Activated T-helper 1 cell treated with anti-CD3 and anti-CD28 coated beads, Interleukin-12 subunit alpha, Interleukin-12 subunit beta, Interleukin-2, Interleukin-4 antibody, amounts not matched to agents 30 ng/mL and 10 ng/mL and 1 ng/mL, durations not matched to agents 14 hours and 24 hours and 36 hours (primary cell): ENCODE measurements at regions of chrX and their contacts with region 1.

Region 1: DNA sequence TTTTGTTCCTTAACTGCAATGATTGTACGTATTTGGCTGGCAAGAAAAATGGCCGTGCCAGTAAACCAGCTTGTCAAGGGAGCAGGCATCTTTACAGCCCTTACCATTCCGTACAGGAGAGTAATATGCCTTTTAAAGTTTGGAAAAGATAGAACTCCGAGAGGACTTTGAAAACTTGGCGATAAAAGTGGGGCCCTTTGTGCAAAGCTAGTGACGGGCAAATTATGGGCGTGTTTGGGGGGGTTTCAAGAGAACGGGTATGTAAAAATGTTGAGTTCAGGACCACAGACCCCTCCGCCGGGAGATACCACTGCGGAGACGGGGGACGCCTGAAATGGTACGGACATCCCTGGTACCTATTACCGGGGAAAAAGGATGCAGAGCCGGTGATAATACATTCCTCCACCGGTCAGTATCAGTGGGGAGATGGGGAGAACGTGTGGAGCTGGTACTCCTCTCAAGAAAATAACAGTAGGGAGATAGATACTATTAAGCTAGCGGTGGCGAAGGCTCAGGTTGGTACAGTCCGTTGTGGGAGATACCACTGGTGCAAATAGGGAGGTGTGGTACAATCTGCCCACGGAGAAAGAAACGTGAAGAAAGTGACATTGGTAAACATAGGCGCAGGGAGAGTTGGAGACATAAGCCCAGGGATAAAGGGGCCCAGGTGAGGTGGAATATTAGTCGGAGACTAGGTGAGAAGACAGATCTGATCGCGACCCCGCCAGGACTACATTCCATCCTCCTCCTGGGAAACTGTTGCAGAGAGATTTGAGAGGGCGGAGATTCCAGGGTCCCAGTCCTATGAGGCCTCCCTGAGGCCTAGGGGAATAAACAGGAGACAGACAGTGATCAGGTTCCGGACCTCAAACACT is 14.5 kb downstream of the SPACA5 start:
- DNase-seq: peak; percentile 54
- H3K4me3 Mint-ChIP-seq: peak overlapping the region; percentile 92
- H3K27ac Mint-ChIP-seq: peak overlapping the region; percentile 97
- H3K4me1 Mint-ChIP-seq: peaks cover 6% of the 10 kb centered on the region
- H3K27me3 Mint-ChIP-seq: peaks cover 7% of the 10 kb centered on the region

Region 2: GRCh38 chrX:47266643-47267042 is 754.6 kb before region 1 on chrX:
- intact Hi-C with region 1: no loop called
- DNase-seq: no peak
- H3K4me3 Mint-ChIP-seq: no peak overlapping the region
- H3K27ac Mint-ChIP-seq: peak overlapping the region; percentile 88
- H3K4me1 Mint-ChIP-seq: peaks cover 17% of the 10 kb centered on the region
- H3K27me3 Mint-ChIP-seq: no peaks in the 10 kb centered on the region

Region 3: DNA sequence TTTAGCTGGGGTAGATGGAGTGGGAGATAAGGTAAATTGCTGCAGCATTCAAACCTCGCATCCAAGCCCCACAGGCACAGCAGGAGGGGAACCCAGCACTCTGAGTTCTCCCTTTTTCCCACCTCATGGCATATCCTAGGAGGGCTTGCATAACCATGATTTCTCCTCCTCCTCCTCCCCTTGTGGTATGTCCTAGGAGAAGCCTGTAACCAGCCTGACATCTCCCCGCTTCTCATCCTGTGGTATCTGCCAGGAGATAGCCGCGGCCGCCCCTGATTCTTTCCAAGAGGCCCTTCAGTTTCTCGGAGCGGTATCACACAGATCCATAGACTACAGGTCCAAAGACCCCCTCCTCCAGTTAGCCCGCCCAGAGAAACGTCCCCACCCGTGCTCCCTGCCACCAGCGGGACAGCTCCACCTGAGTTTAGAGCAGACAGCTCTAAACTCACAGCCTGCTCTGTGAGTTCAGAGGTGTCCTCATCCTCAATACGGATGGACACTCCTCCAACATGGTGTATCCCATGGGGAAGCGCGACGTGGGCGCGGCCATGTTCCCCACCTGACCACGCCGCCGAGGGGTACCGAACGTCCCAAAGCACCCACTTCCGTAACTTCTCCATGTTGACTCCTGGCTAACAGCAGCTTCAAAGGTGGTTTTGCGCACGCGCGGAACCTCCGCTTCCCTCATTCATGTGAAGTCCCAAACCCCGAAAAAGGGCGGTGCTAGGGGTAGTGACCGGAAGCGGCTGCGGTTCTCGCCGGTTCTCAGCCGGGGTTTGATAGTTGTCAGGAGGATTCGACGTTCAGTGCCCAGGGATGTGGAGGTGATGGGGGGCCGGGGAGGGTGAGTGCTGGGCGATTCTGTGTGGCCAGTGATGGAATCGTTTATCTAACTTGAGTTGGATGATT is 184.8 kb before region 1 on chrX and contains the start of gene ZNF81:
- intact Hi-C with region 1: loop called (anchors 1 kb)
- DNase-seq: peak; percentile 87
- H3K4me3 Mint-ChIP-seq: peak within 1 kb of the TSS; percentile 98
- H3K27ac Mint-ChIP-seq: peak within 1 kb of the TSS; percentile 97
- H3K4me1 Mint-ChIP-seq: peaks cover 13% of the 10 kb centered on the region
- H3K27me3 Mint-ChIP-seq: no peaks in the 10 kb centered on the region
- total RNA-seq, gene ZNF81: 5.9 and 9.2 TPM in 2 replicates

Region 4: GRCh38 chrX:47854474-47854873 is 166.8 kb before region 1 on chrX:
- intact Hi-C with region 1: loop called (anchors 1 kb)
- DNase-seq: no peak
- H3K4me3 Mint-ChIP-seq: no peak overlapping the region
- H3K27ac Mint-ChIP-seq: no peak overlapping the region
- H3K4me1 Mint-ChIP-seq: peaks cover 6% of the 10 kb centered on the region
- H3K27me3 Mint-ChIP-seq: no peaks in the 10 kb centered on the region

Region 5: DNA sequence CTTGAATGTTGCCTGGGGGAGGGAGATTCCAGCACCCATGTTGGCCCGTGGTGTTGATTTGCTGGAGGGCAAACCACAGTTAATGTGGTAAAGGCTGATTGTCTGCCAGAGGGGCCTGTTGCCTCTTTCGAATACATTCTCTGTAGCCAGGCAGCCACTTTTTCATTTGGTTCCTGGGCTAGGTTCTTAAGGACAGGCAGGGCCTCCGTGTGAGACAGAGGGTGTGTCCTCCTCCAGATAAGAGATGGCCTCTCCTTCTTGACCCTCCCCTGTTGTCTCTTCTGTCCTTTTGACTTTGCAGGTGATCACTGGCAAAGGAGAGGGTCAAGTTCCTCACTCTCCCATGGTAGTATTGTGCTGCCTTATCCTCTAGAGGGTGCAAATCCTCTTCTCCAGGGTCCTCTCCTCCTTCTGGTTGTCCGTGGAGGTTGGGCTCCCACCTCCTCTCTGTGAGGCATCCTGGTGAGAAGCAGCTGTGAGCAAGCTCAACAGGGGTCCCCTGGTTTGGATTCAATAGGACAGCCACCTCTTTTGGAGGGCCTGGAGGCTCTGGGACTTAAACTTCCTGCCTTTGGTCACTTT is 62.4 kb before region 1 on chrX:
- intact Hi-C with region 1: loop called (anchors 1 kb)
- DNase-seq: no peak
- H3K4me3 Mint-ChIP-seq: no peak overlapping the region
- H3K27ac Mint-ChIP-seq: no peak overlapping the region
- H3K4me1 Mint-ChIP-seq: no peaks in the 10 kb centered on the region
- H3K27me3 Mint-ChIP-seq: no peaks in the 10 kb centered on the region

Region 6: DNA sequence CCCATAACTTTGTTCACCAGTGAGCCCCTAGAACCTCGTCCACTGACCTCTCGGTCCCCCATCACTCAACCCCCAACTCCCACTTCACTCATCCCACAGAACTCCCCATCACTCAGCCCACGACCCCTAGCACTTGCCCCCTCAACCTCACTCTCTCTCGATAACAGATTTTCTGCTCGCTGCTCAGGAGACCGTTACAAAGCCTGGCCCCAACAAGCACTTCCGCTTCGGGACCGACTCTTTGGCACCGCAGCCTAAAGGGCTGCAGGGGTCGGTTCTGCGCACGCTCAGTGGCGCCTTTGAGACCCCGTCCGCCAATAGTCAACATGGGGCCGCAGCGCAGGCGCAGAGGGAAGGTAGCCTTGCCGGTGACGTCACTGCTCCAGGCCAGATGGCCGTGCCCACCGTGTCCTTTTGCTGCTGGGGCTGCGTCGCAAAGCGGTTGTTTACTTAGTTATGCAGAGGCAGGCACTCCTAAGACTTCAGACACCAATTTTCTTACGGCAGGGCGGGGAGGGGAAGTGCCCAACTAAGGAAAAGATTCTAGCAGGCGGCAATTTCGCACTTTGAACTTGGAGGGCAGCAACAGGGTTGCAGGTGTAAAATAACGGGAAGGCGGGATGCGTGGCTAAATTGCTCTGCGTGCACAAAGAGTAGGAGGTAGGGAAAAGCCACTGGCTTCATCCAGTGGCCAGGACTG is 17.4 kb before region 1 on chrX and contains the start of gene ZNF182:
- intact Hi-C with region 1: no loop called
- DNase-seq: peak; percentile 86
- H3K4me3 Mint-ChIP-seq: peak within 1 kb of the TSS; percentile 99
- H3K27ac Mint-ChIP-seq: peak within 1 kb of the TSS; percentile 99
- H3K4me1 Mint-ChIP-seq: peaks cover 18% of the 10 kb centered on the region
- H3K27me3 Mint-ChIP-seq: no peaks in the 10 kb centered on the region
- total RNA-seq, gene ZNF182: 5.4 TPM in 2 replicates